PC-9 (cell line): ENCODE measurements at regions of chr6 and their contacts with region 1.

Region 1: GRCh38 chr6:143060354-143060805 is 309 bp upstream of the AIG1 start:
- DNase-seq: peak; percentile 75 to 84
- H3K4me3 ChIP-seq: peak overlapping the region; percentile 66
- H3K27ac ChIP-seq: peak overlapping the region; percentile 97
- H3K4me1 ChIP-seq: peaks cover 51% of the 10 kb centered on the region
- H3K27me3 ChIP-seq: no peaks in the 10 kb centered on the region
- CTCF ChIP-seq: no peak; the same call in 1 of the 2 replicates

Region 2: GRCh38 chr6:142474531-142475289 is 585.7 kb before region 1 on chr6:
- CTCF ChIA-PET with region 1: no interaction called
- POLR2A ChIA-PET with region 1: no interaction called
- intact Hi-C with region 1: loop called (anchors 10 kb)
- DNase-seq: peak; percentile 58 to 71
- H3K4me3 ChIP-seq: peak overlapping the region; percentile 38; the same call in 1 of the 2 replicates
- H3K27ac ChIP-seq: no peak overlapping the region
- H3K4me1 ChIP-seq: no peaks in the 10 kb centered on the region
- H3K27me3 ChIP-seq: no peaks in the 10 kb centered on the region
- CTCF ChIP-seq: peak; percentile 91

Region 3: GRCh38 chr6:142692942-142693341 is 367.4 kb before region 1 on chr6:
- CTCF ChIA-PET with region 1: no interaction called
- POLR2A ChIA-PET with region 1: no interaction called
- intact Hi-C with region 1: loop called (anchors 1 kb)
- DNase-seq: peak; percentile 37 to 58
- H3K4me3 ChIP-seq: no peak overlapping the region
- H3K27ac ChIP-seq: no peak overlapping the region
- H3K4me1 ChIP-seq: peaks cover 21% of the 10 kb centered on the region; the same call in 1 of the 2 replicates
- H3K27me3 ChIP-seq: no peaks in the 10 kb centered on the region
- CTCF ChIP-seq: peak; percentile 97

Region 4: DNA sequence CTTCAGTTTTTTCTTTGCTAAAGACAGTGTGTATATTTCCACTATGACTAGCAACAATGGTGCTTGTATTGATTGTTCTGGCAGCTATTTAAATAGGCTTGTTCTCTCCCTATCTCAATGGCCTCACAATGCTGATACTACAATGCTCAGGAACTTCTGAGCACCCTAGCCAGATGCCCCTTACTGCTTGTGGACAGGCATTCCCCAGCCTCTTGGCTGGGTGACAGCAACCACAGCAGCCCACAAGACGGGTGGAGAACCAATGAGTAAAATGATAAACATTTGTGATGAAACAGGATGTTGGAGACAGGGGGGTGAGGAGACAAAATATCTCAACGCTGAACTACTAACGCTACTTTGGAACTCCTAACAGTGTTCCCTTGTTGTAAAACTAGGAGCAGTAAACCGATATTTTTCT is 157.7 kb before region 1 on chr6:
- CTCF ChIA-PET with region 1: no interaction called
- POLR2A ChIA-PET with region 1: no interaction called
- intact Hi-C with region 1: loop called (anchors 1 kb)
- DNase-seq: peak; percentile 81 to 91
- H3K4me3 ChIP-seq: peak overlapping the region; percentile 40; the same call in 1 of the 2 replicates
- H3K27ac ChIP-seq: peak overlapping the region; percentile 82
- H3K4me1 ChIP-seq: peaks cover 38% of the 10 kb centered on the region
- H3K27me3 ChIP-seq: no peaks in the 10 kb centered on the region
- CTCF ChIP-seq: no peak

Region 5: GRCh38 chr6:143397229-143398222 is 337.1 kb after region 1 on chr6:
- CTCF ChIA-PET with region 1: no interaction called
- POLR2A ChIA-PET with region 1: interaction called, 3 read pairs
- intact Hi-C with region 1: loop called (anchors 1 kb)
- DNase-seq: peak; percentile 91 to 98
- H3K4me3 ChIP-seq: no peak overlapping the region
- H3K27ac ChIP-seq: peak overlapping the region; percentile 90
- H3K4me1 ChIP-seq: peaks cover 70% of the 10 kb centered on the region
- H3K27me3 ChIP-seq: no peaks in the 10 kb centered on the region
- CTCF ChIP-seq: no peak